ENCODE measurements at regions of chr1 and their contacts with region 1.

Region 1: DNA sequence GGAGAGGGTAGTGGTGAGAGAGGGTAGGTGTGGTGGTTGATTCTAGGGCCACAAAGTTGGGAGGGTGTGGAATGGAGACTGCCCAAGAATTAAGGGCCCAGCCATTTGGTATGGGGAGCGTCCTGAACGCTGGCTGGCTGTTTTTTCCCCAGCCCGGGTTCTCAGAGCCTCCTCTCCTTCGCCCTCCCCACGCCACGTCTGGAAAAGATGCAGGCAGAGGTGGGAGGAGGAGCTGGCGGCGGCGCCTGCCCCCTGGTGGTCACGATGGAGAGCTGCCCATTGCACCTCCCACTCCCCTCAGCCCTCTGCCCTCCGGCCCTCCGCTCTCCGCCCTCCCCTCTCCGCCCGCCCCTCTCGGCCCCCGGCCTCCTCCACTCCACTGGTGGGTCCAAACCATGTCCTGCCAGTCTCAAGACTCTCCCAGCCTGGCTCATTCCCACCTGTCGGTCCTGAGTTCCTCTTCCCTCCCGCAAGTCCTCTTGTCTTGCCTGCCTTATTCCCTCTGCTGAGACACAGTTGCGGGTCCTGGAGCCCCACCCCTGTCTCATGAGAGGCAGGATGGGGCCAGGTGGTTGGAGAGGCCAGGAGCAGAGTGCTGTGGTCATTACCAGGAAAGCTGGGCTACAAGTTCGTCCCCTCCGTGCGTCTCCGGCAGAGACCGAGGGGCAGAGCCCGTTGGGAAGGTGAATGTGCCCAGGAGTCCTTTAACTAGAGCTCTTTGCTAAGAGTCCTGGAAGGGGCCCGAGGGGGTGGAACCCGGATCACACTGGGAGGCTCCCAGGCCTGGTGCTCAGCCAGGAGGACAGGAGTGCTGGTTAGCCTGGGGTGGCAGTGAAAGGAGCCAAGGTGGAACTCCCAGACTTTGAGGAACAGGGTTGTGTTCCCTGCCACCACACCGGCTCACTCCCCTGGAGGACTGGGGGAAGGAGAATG is 22.6 kb downstream of the ETNK2 start:
- DNase-seq: no peak
- H3K4me3 ChIP-seq: no peak overlapping the region
- H3K27me3 ChIP-seq: no peaks in the 10 kb centered on the region
- CTCF ChIP-seq: peak; percentile 91

Region 2: GRCh38 chr1:203795441-203796235 is 333.6 kb before region 1 on chr1 and contains the starts of genes ZBED6 and ZC3H11A:
- CTCF ChIA-PET with region 1: no interaction called
- POLR2A ChIA-PET with region 1: no interaction called
- DNase-seq: peak; percentile 94
- H3K4me3 ChIP-seq: peak within 1 kb of the TSS; percentile 86
- H3K27me3 ChIP-seq: no peaks in the 10 kb centered on the region
- CTCF ChIP-seq: no peak
- polyA plus RNA-seq, gene ZBED6: 12.6 and 23.3 TPM in 2 replicates
- polyA plus RNA-seq, gene ZC3H11A: 55.2 and 76.3 TPM in 2 replicates

Region 3: DNA sequence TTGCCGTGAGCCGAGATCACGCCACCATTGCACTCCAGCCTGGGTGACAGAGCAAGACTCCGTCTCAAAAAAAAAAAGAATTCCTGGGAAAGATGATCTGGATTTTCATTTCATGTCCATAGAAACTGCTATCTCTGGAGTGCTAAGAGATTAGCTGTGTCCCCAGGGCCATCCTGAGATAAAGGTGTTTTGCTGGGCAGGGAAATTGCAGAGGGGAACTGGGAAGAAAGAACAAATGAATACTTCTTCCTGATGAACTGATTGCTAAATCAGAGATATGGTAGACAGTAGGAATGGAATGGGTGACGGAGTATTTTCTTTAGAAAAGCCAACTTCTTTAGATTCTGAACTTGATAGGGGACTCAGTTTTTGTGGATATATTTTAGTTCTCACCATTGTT is 248.6 kb before region 1 on chr1:
- CTCF ChIA-PET with region 1: interaction called, 456 read pairs
- POLR2A ChIA-PET with region 1: no interaction called
- DNase-seq: no peak
- H3K4me3 ChIP-seq: no peak overlapping the region
- H3K27me3 ChIP-seq: no peaks in the 10 kb centered on the region
- CTCF ChIP-seq: no peak

Region 4: DNA sequence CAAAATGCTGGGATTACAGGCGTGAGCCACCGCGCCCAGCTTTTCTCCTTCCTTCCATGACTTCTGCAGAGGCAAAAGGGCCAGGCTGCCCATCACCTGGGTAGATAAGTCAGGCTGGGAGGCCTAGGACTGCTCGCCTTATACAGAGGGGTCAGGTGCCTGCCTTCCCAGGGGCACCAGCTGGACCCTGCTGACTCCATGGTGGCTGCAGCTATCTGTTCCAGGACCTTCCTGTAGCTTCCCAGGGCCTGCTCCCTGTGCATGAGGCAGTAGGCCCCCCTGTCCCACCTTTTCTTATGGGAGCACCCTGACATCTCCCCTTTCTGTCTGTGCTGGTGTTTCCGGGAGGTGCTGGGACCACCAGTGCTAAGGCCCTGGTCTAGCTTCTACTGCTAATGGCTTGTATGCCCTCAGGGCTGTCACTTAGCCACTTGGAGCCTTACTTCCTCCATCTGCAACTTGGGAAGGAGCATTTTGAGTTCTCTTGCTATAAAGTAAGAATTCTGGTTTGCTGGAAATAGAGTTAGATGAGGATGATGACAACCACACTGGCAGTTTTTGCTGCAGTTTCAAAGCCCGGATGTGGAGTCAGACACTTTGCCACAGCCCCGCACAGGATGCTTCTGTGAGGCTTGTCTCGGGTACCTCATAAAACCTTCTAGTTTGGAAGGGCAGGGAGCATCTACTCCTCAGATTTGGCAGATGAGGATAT is 41.9 kb before region 1 on chr1:
- CTCF ChIA-PET with region 1: interaction called, 10 read pairs
- POLR2A ChIA-PET with region 1: no interaction called
- DNase-seq: no peak
- H3K4me3 ChIP-seq: no peak overlapping the region
- H3K27me3 ChIP-seq: no peaks in the 10 kb centered on the region
- CTCF ChIP-seq: no peak

Region 5: GRCh38 chr1:204145033-204145504 is 15.8 kb after region 1 on chr1:
- CTCF ChIA-PET with region 1: interaction called, 59 read pairs
- POLR2A ChIA-PET with region 1: no interaction called
- DNase-seq: no peak
- H3K4me3 ChIP-seq: no peak overlapping the region
- H3K27me3 ChIP-seq: no peaks in the 10 kb centered on the region
- CTCF ChIP-seq: no peak

Region 6: DNA sequence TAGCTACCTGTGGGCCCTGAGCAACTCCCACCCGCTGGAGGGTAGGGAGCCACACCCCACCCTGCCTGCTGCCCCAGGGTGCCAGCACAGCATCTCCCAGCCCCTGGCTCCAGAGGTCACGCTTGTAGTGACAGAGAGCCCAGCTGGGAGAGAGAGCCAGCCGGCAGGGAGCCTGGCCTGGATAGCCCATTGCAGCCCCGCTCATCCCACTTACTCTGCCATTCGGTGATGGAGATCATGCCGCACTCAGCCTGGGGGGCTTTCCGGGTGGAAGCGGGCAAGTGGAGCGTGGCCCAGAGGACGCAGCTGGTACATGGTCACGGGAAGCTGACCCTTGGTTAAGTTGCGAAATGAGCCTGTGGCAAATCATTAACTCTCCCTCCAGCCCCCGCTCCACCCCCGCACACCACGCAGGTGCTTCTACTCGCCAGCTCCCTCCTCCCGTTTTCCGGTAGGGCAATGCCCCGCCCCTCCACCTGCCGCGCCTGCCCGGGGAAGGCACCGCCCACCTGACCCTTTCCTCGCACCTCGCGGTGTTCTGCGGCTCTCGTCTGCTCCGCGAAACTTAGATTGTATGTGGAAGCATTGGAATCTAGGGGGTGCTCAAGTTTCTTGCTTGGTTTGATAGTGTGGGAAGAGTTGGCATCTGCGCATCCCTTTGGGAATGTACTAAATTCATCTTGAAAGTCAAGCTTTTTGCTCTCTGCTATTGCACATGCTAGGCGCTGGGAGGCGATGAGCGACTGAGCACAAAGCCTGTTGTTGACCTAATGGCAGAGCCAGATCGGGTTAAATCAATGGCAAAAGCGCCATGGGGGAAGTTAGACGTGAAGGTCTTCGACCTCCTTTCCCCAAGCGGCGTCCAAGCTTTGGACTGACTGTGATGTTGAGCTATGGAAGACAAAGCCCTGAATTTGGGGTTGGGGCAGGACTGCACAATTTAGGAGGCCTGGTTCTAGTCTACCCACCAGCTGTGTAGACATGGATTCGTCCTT is 84.7 kb after region 1 on chr1 and contains the start of gene GOLT1A:
- CTCF ChIA-PET with region 1: no interaction called
- POLR2A ChIA-PET with region 1: no interaction called
- DNase-seq: peak; percentile 32
- H3K4me3 ChIP-seq: no peak within 1 kb of the TSS
- H3K27me3 ChIP-seq: no peaks in the 10 kb centered on the region
- CTCF ChIP-seq: peak; percentile 87
- polyA plus RNA-seq, gene GOLT1A: 0.21 TPM in 2 replicates

Measured in BJ (cell line).